GM10248 (cell line): ENCODE measurements at regions of chr18 and their contacts with region 1.

Region 1: DNA sequence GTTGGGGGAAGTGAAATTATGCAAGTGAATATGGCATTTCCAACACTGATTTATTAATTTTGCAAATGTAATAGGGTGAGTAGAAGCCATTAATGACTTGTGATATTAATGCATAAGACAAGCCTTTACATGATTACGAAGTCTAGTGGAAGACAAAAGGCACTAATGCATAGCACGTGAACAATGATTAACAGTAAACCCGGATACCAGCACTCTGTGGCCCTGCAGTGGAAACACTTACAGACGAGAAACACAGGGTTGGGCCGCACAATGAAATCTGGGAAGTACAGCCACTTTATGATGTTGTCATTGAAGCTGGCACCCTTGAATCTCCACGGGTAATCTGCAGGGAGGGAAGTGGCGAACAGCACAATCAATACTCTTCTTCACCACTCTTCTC is 233.4 kb downstream of the NAPG start:
- DNase-seq: no peak
- CTCF ChIP-seq: no peak

Region 2: GRCh38 chr18:10525371-10526210 is 233.7 kb before region 1 on chr18 and contains the start of gene NAPG:
- CTCF ChIA-PET with region 1: no interaction called
- POLR2A ChIA-PET with region 1: no interaction called
- DNase-seq: peak; percentile 96
- CTCF ChIP-seq: no peak

Region 3: DNA sequence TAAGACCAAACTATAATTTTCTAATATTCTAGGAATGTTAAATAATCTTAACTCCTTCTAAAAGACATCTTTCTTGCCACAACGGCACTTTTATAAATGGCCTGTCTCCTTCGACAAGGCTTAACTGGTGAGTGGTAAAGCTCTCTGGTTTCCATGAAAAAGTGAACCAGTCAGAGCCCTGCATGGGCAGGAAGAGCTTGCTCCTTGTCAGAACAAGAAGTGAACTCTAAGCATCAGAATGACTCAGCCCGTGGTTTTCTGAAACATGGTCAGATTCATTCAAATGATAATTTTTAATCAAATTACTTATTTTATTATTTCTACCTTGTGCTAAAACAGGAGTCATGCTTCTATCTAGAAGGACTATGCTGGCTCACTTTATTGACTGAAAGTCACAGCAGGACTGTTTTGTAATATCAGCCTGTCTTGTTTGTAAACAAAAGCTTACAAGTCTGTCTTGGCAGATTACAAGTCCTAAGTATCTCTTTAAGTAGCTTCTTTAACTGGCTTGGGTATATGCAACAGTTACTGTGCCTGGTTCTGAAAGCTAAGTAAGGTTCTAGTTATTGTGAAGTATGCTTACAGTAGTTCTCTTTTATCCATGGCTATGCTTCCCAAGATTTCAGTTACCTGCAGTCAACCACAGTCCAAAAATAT is 11.9 kb after region 1 on chr18:
- CTCF ChIA-PET with region 1: interaction called, 20 read pairs
- POLR2A ChIA-PET with region 1: no interaction called
- DNase-seq: peak; percentile 27
- CTCF ChIP-seq: no peak

Region 4: DNA sequence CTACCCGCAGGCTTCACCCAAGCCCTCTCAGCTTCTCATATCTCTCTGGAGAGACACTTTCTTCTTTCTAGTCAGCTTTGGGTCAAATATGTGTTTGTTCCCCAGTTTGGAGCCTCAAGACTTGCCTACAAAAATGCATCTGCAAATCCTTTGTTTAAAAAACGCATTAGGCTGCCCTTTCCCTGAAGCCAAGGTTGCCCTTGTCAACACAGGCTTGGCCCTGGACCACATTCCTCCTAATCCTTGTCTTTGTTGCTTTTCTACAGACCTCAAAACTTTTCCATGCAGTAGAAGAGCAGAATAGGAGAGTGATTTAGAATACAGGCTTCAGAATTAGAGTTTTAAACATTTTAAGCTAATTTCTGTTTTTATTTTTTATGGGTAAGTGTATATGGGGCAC is 74.4 kb after region 1 on chr18:
- CTCF ChIA-PET with region 1: no interaction called
- POLR2A ChIA-PET with region 1: no interaction called
- DNase-seq: no peak
- CTCF ChIP-seq: no peak